WTC11 (cell line): ENCODE measurements at regions of chr1 and their contacts with region 1.

Region 1: DNA sequence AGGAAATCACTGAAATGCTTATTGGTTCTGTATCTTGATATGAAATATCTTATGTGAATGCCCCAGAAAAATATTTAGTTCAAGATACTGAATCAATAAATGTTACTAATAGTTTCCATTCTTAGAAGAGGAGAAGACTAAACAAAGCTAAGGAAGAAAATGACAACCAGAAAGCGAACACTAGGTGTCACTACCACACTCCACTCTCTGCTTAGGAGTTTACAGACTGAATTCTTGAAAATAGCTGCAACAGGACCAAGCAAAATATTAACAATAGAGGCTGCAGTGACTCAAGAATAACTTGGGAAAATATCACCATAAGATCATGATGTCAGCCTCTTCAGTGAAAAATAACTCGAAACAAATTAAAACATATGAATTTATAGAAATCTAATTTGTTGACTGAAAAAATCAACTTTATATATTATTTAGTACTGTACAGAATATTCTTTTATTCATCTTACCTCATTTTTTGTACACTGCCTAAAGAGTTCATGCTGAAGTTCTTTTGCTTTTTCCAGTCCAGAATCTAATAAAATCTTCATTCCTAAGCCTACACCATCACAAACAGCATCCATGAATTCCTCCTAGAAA is 61.6 kb downstream of the KIF14 start:
- DNase-seq: no peak
- ATAC-seq: peak; percentile 58; the same call in 1 of the 2 replicates
- H3K4me3 Mint-ChIP-seq: no peak overlapping the region
- H3K27ac Mint-ChIP-seq: no peak overlapping the region
- H3K4me1 Mint-ChIP-seq: peaks cover 17% of the 10 kb centered on the region
- H3K27me3 Mint-ChIP-seq: no peaks in the 10 kb centered on the region
- CTCF ChIP-seq: no peak

Region 2: DNA sequence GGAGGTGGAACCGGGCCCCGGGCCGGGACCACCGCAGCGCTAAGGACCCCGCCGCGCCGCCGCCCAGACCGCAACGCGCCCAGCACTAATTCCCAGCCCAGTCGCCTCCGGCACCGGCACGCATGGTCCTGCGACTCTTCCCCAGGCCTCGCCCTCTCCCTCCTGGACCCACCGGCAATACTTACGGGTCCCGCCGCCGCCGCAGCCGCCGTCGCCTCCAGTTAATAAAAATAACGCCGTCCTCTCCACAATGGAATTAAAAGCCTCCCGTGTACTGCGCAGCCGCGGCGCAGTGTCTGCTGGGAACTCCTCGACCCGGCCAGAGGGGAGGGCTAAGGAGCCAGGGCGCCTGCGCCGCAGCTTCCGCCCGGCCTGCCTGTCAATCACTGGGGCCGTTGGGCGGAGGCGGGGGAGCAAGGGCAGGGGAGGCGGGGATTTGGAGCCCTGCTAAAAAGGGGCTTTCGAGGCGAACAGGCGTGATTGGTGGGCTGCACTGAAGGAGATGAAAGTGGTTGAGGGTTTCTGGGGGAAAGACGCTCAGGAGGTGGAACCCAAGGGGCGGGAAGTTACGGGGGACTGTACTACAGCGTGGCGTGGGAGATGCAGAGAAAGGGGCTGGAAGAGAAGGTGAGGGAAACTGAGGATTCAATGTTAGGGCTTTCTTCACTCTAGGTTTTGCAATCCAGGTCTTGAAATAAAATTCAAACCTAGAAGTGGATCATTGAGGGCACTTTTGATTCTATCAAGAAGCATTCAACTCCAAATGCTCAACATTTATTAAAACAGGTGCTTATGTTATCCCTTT is 149.0 kb before region 1 on chr1 and contains the start of gene ZNF281:
- CTCF ChIA-PET with region 1: no interaction called
- POLR2A ChIA-PET with region 1: no interaction called
- DNase-seq: peak; percentile 99
- ATAC-seq: peak; percentile 87
- H3K4me3 Mint-ChIP-seq: peak within 1 kb of the TSS; percentile 97
- H3K27ac Mint-ChIP-seq: peak within 1 kb of the TSS; percentile 99
- H3K4me1 Mint-ChIP-seq: peaks cover 65% of the 10 kb centered on the region
- H3K27me3 Mint-ChIP-seq: no peaks in the 10 kb centered on the region
- CTCF ChIP-seq: no peak
- total RNA-seq, gene ZNF281: 47.7 to 49.6 TPM (median 49.3 TPM) in 3 replicates

Region 3: GRCh38 chr1:200530623-200531261 is 28.2 kb before region 1 on chr1:
- CTCF ChIA-PET with region 1: interaction called, 20 read pairs
- POLR2A ChIA-PET with region 1: no interaction called
- DNase-seq: no peak
- ATAC-seq: peak; percentile 61
- H3K4me3 Mint-ChIP-seq: no peak overlapping the region
- H3K27ac Mint-ChIP-seq: no peak overlapping the region
- H3K4me1 Mint-ChIP-seq: peaks cover 15% of the 10 kb centered on the region
- H3K27me3 Mint-ChIP-seq: peaks cover 6% of the 10 kb centered on the region
- CTCF ChIP-seq: no peak

Region 4: GRCh38 chr1:200873116-200873670 is 314.2 kb after region 1 on chr1:
- CTCF ChIA-PET with region 1: interaction called, 12 read pairs
- POLR2A ChIA-PET with region 1: interaction called, 4 read pairs
- DNase-seq: peak; percentile 58
- ATAC-seq: peak; percentile 28
- H3K4me3 Mint-ChIP-seq: no peak overlapping the region
- H3K27ac Mint-ChIP-seq: no peak overlapping the region
- H3K4me1 Mint-ChIP-seq: peaks cover 20% of the 10 kb centered on the region
- H3K27me3 Mint-ChIP-seq: peaks cover 42% of the 10 kb centered on the region
- CTCF ChIP-seq: no peak